Activated T-helper 2 cell treated with anti-CD3 and anti-CD28 coated beads, Interferon-gamma antibody, Interleukin-2, Interleukin-4, amounts not matched to agents 10 μg/mL and 5 μg/mL and 100 μg/mL, durations not matched to agents 14 hours and 24 hours and 36 hours (primary cell): ENCODE measurements at regions of chr19 and their contacts with region 1.

Region 1: GRCh38 chr19:55258828-55259539 is at the start of gene PPP6R1:
- DNase-seq: peak; percentile 94
- H3K4me3 Mint-ChIP-seq: peak within 1 kb of the TSS; percentile 92
- H3K27ac Mint-ChIP-seq: peak within 1 kb of the TSS; percentile 97
- H3K4me1 Mint-ChIP-seq: peaks cover 43% of the 10 kb centered on the region
- H3K27me3 Mint-ChIP-seq: no peaks in the 10 kb centered on the region
- total RNA-seq, gene PPP6R1: 180 and 183 TPM in 2 replicates

Region 2: DNA sequence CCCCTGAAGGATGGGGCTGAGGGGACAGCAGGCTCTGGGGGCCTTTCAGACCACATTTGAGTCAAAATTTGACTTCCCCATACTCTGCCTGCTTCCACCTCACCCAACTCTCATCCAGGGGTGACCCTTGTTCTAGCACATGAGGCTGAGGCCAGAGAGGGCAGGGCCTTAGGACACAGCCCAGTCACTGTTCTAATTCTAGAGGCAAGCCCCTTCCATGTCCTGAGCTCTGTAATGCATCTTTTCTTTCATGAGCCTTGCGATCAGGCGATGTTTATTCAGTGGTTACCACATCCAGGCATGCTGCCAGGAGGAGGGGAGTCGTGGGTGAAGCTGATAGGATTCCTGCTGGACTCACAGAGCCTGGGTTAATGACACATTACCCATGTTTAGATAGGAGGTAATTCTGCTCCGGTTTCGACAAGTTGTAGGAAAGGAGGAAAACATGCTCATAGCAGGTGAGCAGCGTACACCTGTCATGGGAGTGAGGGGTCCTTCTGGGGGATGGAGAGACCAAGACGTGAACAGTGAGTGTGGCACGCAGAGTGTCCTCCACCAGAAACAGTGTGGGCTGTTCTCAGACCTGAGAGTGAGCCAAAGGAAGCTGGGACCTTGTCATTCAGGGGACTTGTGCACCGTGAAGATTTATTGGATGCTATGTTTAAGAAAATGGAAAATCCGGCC is 1049.0 kb before region 1 on chr19:
- intact Hi-C with region 1: loop called (anchors 10 kb)
- DNase-seq: no peak
- H3K4me3 Mint-ChIP-seq: peak overlapping the region; percentile 30
- H3K27ac Mint-ChIP-seq: peak overlapping the region; percentile 71
- H3K4me1 Mint-ChIP-seq: peaks cover 59% of the 10 kb centered on the region
- H3K27me3 Mint-ChIP-seq: no peaks in the 10 kb centered on the region

Region 3: DNA sequence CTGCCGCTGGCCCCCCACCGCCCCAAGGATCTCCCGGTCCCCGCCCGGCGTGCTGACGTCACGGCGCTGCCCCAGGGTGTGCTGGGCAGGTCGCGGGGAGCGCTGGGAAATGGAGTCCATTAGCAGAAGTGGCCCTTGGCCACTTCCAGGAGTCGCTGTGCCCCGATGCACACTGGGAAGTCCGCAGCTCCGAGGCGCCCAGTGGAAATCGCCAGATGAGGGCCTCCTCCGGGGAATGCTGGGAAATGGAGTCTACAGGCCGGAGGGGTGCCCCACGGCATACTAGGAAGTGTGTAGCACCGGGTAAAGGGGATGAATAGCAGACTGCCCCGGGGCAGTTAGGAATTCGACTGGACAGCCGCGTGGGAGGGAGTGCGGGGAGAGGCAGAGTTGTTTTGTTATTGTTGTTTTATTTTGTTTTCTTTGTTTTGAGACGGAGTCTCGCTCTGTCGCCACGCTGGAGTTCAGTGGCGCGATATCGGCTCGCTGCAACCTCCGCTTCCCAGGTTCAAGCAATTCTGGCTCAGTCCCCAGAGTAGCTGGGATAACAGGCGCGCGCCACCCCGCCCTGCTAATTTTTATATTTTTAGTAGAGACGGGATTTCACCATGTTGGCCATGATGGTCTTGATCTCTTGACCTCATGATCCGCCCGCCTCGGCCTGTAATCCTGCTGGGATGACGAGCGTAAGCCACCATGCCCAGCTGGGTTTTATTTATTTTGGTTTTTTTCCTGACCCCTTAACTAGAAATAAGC is 141.2 kb before region 1 on chr19 and contains the start of gene PPP1R12C:
- intact Hi-C with region 1: loop called (anchors 5 kb)
- DNase-seq: peak; percentile 96
- H3K4me3 Mint-ChIP-seq: peak within 1 kb of the TSS; percentile 100
- H3K27ac Mint-ChIP-seq: peak within 1 kb of the TSS; percentile 93
- H3K4me1 Mint-ChIP-seq: peaks cover 29% of the 10 kb centered on the region
- H3K27me3 Mint-ChIP-seq: peaks cover 6% of the 10 kb centered on the region
- total RNA-seq, gene PPP1R12C: 104 and 108 TPM in 2 replicates

Region 4: DNA sequence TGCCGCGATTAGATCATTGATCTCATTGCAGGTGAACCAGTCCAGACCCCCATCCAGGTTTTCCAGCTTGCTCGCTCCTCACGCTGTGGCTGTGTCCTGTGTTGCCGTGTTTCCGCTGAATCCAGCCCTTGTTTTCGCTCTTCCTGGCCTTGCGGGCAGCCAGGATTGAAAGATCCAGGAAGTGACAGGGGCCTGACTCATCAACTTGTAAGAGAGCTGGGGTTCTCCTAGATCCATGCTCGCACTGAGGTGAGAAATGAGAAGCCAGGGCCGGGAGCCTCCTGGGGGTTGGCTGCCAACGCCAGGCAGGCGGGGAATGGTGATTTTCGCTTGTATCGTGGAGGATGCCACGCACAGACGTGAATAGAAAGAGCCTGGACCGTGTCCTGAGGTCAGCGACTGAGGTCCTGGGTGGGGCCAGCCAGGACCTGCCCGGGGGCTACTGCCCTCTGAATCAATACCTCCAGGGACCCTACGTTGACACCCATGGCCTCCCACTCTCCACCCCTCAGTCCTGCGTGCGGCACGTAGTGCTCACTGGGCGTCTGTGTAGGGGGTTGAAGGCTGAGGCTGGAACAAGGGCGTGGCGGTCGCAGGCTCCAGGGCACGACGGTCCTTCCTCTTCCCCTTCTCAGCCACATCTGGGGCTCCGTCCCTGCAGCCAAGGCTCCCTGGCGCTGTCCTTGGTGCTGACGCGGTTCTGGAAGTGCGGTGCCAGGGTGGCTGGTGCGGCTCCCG is 42.4 kb before region 1 on chr19:
- intact Hi-C with region 1: loop called (anchors 5 kb)
- DNase-seq: peak; percentile 42
- H3K4me3 Mint-ChIP-seq: peak overlapping the region; percentile 60
- H3K27ac Mint-ChIP-seq: no peak overlapping the region
- H3K4me1 Mint-ChIP-seq: peaks cover 9% of the 10 kb centered on the region
- H3K27me3 Mint-ChIP-seq: no peaks in the 10 kb centered on the region

Region 5: GRCh38 chr19:55339048-55339888 is 80.3 kb after region 1 on chr19 and contains the start of gene KMT5C:
- intact Hi-C with region 1: loop called (anchors 1 kb)
- DNase-seq: peak; percentile 100
- H3K4me3 Mint-ChIP-seq: peak within 1 kb of the TSS; percentile 93
- H3K27ac Mint-ChIP-seq: peak within 1 kb of the TSS; percentile 95
- H3K4me1 Mint-ChIP-seq: peaks cover 14% of the 10 kb centered on the region
- H3K27me3 Mint-ChIP-seq: peaks cover 2% of the 10 kb centered on the region
- total RNA-seq, gene KMT5C: 34.3 and 35.3 TPM in 2 replicates

Region 6: DNA sequence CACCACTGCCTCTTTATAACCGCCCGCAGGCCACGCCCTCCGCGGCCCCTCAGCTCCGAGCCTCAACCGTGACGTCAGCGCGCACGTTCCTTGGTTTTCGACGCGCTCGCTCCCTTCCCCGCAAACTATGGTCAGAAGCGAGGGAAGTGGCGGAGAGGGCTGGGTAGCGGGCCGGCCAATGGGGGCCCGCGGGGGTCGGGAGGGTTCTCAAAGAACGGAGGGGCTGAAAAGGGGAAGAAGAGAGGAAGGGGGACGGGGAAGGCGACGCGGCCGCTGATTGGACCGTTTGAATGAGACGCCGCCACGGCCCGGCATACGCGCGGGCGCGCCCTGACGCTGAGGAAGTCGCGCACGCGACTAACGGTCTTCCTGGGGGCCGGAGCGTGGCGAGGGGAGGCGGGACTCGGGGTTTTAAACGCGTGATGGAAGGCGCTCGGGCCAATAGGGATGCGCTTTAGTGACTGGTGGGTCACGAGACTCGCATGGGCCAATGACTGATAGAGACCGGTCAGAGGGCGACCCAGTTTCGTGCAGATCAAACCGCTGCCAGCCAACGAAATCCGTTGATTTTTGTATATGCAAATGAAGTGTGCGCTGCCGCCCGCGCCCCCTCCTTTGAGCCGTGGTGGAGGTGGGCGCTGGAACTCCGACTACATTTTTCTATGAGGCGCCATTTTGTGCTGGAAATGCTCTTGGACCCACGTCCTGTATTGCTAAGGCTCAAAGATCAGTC is 149.0 kb after region 1 on chr19:
- intact Hi-C with region 1: loop called (anchors 1 kb)
- DNase-seq: peak; percentile 98
- H3K4me3 Mint-ChIP-seq: peak overlapping the region; percentile 93
- H3K27ac Mint-ChIP-seq: peak overlapping the region; percentile 97
- H3K4me1 Mint-ChIP-seq: peaks cover 22% of the 10 kb centered on the region
- H3K27me3 Mint-ChIP-seq: peaks cover 4% of the 10 kb centered on the region